PC-9 (cell line): ENCODE measurements at regions of chr1 and their contacts with region 1.

Region 1: GRCh38 chr1:162391790-162392563 is 10.4 kb downstream of the C1orf226 start:
- DNase-seq: peak in 1 of 2 experiments; percentile 21
- H3K4me3 ChIP-seq: no peak overlapping the region
- H3K27ac ChIP-seq: no peak overlapping the region
- H3K4me1 ChIP-seq: no peaks in the 10 kb centered on the region
- H3K27me3 ChIP-seq: no peaks in the 10 kb centered on the region
- CTCF ChIP-seq: peak; percentile 95

Region 2: GRCh38 chr1:160453443-160453842 is 1938.5 kb before region 1 on chr1:
- CTCF ChIA-PET with region 1: no interaction called
- POLR2A ChIA-PET with region 1: no interaction called
- intact Hi-C with region 1: no loop called
- DNase-seq: no peak
- H3K4me3 ChIP-seq: no peak overlapping the region
- H3K27ac ChIP-seq: no peak overlapping the region
- H3K4me1 ChIP-seq: no peaks in the 10 kb centered on the region
- H3K27me3 ChIP-seq: peaks cover 73% of the 10 kb centered on the region
- CTCF ChIP-seq: no peak

Region 3: DNA sequence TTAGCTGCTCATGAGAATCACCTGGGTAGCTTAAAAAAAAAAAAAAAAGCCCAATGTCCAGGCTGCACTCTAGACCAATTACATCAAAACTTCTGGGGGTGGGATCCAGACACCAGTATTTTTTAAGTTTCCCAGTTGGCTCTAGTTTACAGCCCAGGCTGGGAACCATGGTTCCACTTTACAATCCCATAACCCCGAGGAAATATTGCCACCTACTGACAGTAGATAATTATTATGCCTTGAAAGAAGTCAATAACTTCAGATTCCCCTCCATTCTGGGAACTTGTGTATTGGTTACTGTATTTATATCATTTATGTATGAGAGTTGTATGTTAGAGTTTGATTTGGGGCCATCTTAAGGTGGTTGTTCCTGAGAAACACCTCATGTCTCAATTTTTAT is 115.5 kb before region 1 on chr1:
- CTCF ChIA-PET with region 1: no interaction called
- POLR2A ChIA-PET with region 1: no interaction called
- intact Hi-C with region 1: loop called (anchors 2 kb)
- DNase-seq: no peak
- H3K4me3 ChIP-seq: no peak overlapping the region
- H3K27ac ChIP-seq: no peak overlapping the region
- H3K4me1 ChIP-seq: no peaks in the 10 kb centered on the region
- H3K27me3 ChIP-seq: no peaks in the 10 kb centered on the region
- CTCF ChIP-seq: peak; percentile 71

Region 4: DNA sequence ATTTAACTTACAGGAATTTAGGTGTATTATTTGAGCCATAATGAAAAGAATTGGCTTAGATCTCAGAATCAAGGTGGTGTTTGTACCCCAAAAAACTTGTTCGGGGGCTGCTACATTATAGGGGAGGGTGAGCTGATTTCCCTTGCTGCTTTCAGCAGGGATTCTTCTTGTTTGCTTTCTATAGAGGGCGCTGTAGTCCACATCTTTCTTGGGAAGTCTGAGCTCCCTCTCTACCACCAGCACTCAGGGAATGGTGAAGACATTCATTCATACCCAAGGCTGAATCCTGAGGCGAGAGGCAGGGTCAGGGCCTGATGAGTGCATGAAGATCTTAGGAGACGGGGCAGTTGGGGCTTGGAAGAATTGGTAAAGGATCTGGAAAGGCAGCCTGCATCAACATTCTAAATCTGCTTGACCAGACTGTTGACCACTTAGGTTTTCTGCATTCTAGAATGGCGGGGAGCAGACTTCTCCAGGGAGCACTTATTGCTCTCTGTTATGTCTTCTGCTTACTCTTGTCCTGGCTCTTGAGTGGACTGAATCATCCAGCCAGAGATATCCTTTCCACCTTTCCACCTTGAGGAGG is 34.2 kb before region 1 on chr1:
- CTCF ChIA-PET with region 1: interaction called, 12 read pairs
- POLR2A ChIA-PET with region 1: no interaction called
- intact Hi-C with region 1: loop called (anchors 1 kb)
- DNase-seq: no peak
- H3K4me3 ChIP-seq: no peak overlapping the region
- H3K27ac ChIP-seq: no peak overlapping the region
- H3K4me1 ChIP-seq: no peaks in the 10 kb centered on the region
- H3K27me3 ChIP-seq: no peaks in the 10 kb centered on the region
- CTCF ChIP-seq: peak; percentile 67